Activated CD4-positive, alpha-beta T cell treated with anti-CD3 and anti-CD28 coated beads for 36 hours (primary cell): ENCODE measurements at regions of chr2 and their contacts with region 1.

Region 1: GRCh38 chr2:64653349-64654062 is at the start of gene SERTAD2:
- DNase-seq: peak; percentile 90
- ATAC-seq: peak; percentile 80
- H3K4me3 Mint-ChIP-seq: peak within 1 kb of the TSS; percentile 85
- H3K27ac Mint-ChIP-seq: peak within 1 kb of the TSS; percentile 94
- H3K4me1 Mint-ChIP-seq: peaks cover 76% of the 10 kb centered on the region
- H3K27me3 Mint-ChIP-seq: no peaks in the 10 kb centered on the region
- total RNA-seq, gene SERTAD2: 14.5 to 14.9 TPM

Region 2: GRCh38 chr2:64144057-64145013 is 509.2 kb before region 1 on chr2 and contains the start of gene PELI1:
- CTCF ChIA-PET with region 1: no interaction called
- POLR2A ChIA-PET with region 1: interaction called, 5 read pairs
- intact Hi-C with region 1: loop called in 1 of 2 experiments (anchors 5 kb)
- DNase-seq: peak; percentile 97
- ATAC-seq: peak; percentile 89
- H3K4me3 Mint-ChIP-seq: peak within 1 kb of the TSS; percentile 84
- H3K27ac Mint-ChIP-seq: peak within 1 kb of the TSS; percentile 97
- H3K4me1 Mint-ChIP-seq: peaks cover 30% of the 10 kb centered on the region
- H3K27me3 Mint-ChIP-seq: no peaks in the 10 kb centered on the region
- total RNA-seq, gene PELI1: 21.3 to 29.7 TPM

Region 3: GRCh38 chr2:64273524-64274398 is 379.7 kb before region 1 on chr2:
- CTCF ChIA-PET with region 1: no interaction called
- POLR2A ChIA-PET with region 1: no interaction called
- intact Hi-C with region 1: no loop called
- DNase-seq: no peak
- ATAC-seq: no peak
- H3K4me3 Mint-ChIP-seq: no peak overlapping the region
- H3K27ac Mint-ChIP-seq: no peak overlapping the region
- H3K4me1 Mint-ChIP-seq: peaks cover 23% of the 10 kb centered on the region
- H3K27me3 Mint-ChIP-seq: no peaks in the 10 kb centered on the region

Region 4: GRCh38 chr2:64609227-64609941 is 44.1 kb before region 1 on chr2:
- CTCF ChIA-PET with region 1: interaction called, 6 read pairs
- POLR2A ChIA-PET with region 1: interaction called, 15 read pairs
- intact Hi-C with region 1: loop called in 1 of 2 experiments (anchors 2 kb)
- DNase-seq: peak; percentile 82
- ATAC-seq: peak; percentile 61
- H3K4me3 Mint-ChIP-seq: peak overlapping the region; percentile 65
- H3K27ac Mint-ChIP-seq: no peak overlapping the region
- H3K4me1 Mint-ChIP-seq: peaks cover 25% of the 10 kb centered on the region
- H3K27me3 Mint-ChIP-seq: no peaks in the 10 kb centered on the region

Region 5: DNA sequence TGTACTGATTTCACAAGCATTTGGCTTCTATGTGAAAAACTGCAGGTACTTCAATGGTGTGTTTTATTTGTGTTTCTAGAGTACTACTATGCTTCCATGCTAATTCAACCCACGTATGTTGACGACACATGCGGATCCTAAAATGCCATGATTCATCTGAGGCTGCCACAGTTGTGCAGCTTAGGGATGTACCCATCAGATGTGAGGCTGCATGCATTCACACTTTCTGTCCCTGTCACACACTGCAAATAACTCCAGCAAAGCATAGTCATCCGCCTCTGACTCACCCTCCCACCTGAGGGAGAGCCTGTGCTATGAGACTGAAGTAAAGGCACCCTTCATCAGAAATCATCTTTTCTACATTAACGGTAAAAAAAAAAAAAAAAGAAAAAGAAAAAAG is 22.4 kb after region 1 on chr2:
- CTCF ChIA-PET with region 1: interaction called, 11 read pairs
- POLR2A ChIA-PET with region 1: interaction called, 5 read pairs
- intact Hi-C with region 1: loop called (anchors 1 to 2 kb)
- DNase-seq: peak; percentile 90
- ATAC-seq: peak; percentile 100
- H3K4me3 Mint-ChIP-seq: no peak overlapping the region
- H3K27ac Mint-ChIP-seq: peak overlapping the region; percentile 62
- H3K4me1 Mint-ChIP-seq: peaks cover 44% of the 10 kb centered on the region
- H3K27me3 Mint-ChIP-seq: no peaks in the 10 kb centered on the region

Region 6: GRCh38 chr2:64730551-64731262 is 77.2 kb after region 1 on chr2:
- CTCF ChIA-PET with region 1: interaction called, 7 read pairs
- POLR2A ChIA-PET with region 1: no interaction called
- intact Hi-C with region 1: loop called (anchors 2 kb)
- DNase-seq: peak; percentile 54
- ATAC-seq: peak; percentile 68
- H3K4me3 Mint-ChIP-seq: peak overlapping the region; percentile 74
- H3K27ac Mint-ChIP-seq: peak overlapping the region; percentile 96
- H3K4me1 Mint-ChIP-seq: peaks cover 61% of the 10 kb centered on the region
- H3K27me3 Mint-ChIP-seq: no peaks in the 10 kb centered on the region

Region 7: GRCh38 chr2:64831134-64831976 is 177.8 kb after region 1 on chr2:
- CTCF ChIA-PET with region 1: interaction called, 15 read pairs
- POLR2A ChIA-PET with region 1: interaction called, 3 read pairs
- intact Hi-C with region 1: loop called in 1 of 2 experiments (anchors 1 kb)
- DNase-seq: peak; percentile 92
- ATAC-seq: peak; percentile 96
- H3K4me3 Mint-ChIP-seq: peak overlapping the region; percentile 34
- H3K27ac Mint-ChIP-seq: peak overlapping the region; percentile 86
- H3K4me1 Mint-ChIP-seq: peaks cover 16% of the 10 kb centered on the region
- H3K27me3 Mint-ChIP-seq: no peaks in the 10 kb centered on the region

Region 8: GRCh38 chr2:65056215-65057053 is 402.9 kb after region 1 on chr2 and contains the start of gene CEP68:
- CTCF ChIA-PET with region 1: no interaction called
- POLR2A ChIA-PET with region 1: no interaction called
- intact Hi-C with region 1: loop called in 1 of 2 experiments (anchors 5 kb)
- DNase-seq: peak; percentile 98
- ATAC-seq: peak; percentile 94
- H3K4me3 Mint-ChIP-seq: peak within 1 kb of the TSS; percentile 93
- H3K27ac Mint-ChIP-seq: peak within 1 kb of the TSS; percentile 84
- H3K4me1 Mint-ChIP-seq: peaks cover 55% of the 10 kb centered on the region
- H3K27me3 Mint-ChIP-seq: no peaks in the 10 kb centered on the region
- total RNA-seq, gene CEP68: 4.9 to 6.0 TPM